Activated B cell treated with CpG ODN at 0.5 μM for 24 hours (primary cell): ENCODE measurements at regions of chr12 and their contacts with region 1.

Region 1: DNA sequence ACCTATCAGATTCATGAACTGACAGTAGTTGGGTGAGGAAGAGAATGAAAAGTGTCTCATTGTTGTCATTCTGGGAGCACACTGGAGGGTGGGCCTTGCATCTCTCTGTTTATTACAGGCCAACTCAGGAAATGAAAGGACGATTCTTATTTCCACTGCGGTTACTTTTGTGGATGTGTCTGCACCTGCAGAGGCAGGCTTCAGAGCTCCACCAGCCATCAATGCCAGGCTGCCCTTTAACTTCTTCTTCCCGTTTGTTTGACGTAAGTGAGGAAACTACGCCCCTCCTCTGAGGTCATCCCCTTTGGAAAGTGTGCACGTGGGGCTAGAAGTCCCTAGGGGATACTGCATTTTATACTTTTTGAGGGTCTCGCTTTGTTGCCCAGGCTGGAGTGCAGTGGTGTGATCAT is 33.7 kb downstream of the TCTN1 start:
- DNase-seq: peak; percentile 56
- ATAC-seq: peak; percentile 82
- H3K4me3 Mint-ChIP-seq: peak overlapping the region; percentile 45
- H3K27ac Mint-ChIP-seq: peak overlapping the region; percentile 89
- H3K4me1 Mint-ChIP-seq: peaks cover 96% of the 10 kb centered on the region
- H3K27me3 Mint-ChIP-seq: no peaks in the 10 kb centered on the region
- CTCF ChIP-seq: no peak

Region 2: DNA sequence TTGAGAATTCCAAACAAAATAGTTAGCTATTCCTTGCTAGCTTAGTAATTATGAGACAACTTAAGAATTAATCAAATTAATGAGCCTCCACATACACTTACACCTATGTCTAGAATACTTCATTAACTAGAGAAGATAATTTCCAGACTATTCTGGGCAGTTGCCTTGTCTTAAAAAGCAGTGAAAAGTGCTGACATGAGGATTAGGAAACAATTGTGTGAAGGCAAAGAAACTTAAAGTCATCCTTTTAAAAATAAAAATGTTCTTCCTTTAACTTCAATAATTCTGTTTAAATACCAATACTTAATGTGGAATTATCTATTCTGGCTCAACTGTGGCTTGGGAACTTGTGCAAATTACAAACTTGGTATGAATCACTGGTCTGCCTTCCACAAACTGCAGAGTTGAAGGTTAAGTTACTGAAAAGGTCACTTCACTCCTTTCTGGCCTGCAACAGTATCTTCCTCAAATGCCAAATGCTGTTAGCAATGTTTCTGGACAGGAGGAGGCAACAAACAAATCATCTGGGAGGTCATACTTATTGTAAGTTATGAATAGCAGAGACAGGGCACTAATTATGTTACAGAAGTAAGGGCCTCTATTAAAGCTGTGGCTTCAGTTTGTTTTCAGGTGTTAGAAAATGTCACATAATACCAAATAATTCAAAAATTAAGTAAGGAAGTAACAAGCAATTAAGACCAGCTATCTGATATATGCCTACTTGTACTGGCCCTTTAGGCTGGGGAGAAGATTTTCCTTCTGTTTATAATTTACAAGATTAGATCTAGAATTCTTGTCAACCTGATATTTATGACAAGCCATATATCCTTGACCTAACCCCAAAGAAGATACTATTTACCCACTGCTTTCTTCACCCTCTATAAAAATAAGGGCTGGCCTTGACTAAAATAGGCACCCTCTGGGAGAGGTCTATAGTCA is 83.7 kb before region 1 on chr12:
- CTCF ChIA-PET with region 1: no interaction called
- POLR2A ChIA-PET with region 1: interaction called, 12 read pairs
- intact Hi-C with region 1: no loop called
- DNase-seq: no peak
- ATAC-seq: no peak
- H3K4me3 Mint-ChIP-seq: peak overlapping the region; percentile 55
- H3K27ac Mint-ChIP-seq: peak overlapping the region; percentile 92
- H3K4me1 Mint-ChIP-seq: peaks cover 87% of the 10 kb centered on the region
- H3K27me3 Mint-ChIP-seq: no peaks in the 10 kb centered on the region
- CTCF ChIP-seq: no peak

Region 3: DNA sequence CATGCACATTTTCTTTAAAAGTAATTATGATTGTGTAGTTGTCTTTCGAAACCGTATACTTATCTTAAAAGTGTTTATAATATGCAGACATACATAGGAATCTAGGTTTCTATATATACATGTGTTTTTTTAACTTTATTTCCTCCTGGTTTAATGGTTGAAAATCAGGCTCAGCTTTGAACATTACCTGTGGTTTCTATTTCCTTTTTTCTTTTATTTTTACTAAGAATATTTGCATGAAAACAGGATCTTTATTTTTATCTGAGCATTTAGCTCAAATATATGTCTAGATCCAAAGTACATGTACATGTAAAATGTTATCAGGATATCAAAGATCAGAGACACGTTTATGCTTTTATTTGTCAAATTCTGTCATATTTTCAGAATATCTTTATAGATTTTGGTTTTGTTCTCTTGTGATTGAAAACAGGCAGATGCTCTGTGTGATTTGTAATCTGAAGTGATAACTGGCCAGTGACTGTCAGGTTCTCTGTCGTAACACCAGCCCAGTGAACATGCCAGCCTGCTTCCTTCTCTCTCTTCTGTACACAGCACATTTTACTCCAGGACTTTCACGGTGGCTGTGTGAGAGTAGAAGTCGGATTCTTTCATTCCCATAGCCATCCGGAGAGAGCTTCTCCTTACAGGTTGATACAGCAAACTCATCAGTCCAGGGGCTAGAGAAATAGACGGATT is 20.0 kb before region 1 on chr12:
- CTCF ChIA-PET with region 1: no interaction called
- POLR2A ChIA-PET with region 1: interaction called, 30 read pairs
- intact Hi-C with region 1: loop called (anchors 2 kb)
- DNase-seq: no peak
- ATAC-seq: peak; percentile 69
- H3K4me3 Mint-ChIP-seq: peak overlapping the region; percentile 71
- H3K27ac Mint-ChIP-seq: peak overlapping the region; percentile 95
- H3K4me1 Mint-ChIP-seq: peaks cover 83% of the 10 kb centered on the region
- H3K27me3 Mint-ChIP-seq: no peaks in the 10 kb centered on the region
- CTCF ChIP-seq: no peak

Region 4: GRCh38 chr12:110670161-110670701 is 22.6 kb after region 1 on chr12:
- CTCF ChIA-PET with region 1: no interaction called
- POLR2A ChIA-PET with region 1: interaction called, 12 read pairs
- intact Hi-C with region 1: no loop called
- DNase-seq: no peak
- ATAC-seq: peak; percentile 36
- H3K4me3 Mint-ChIP-seq: peak overlapping the region; percentile 78
- H3K27ac Mint-ChIP-seq: peak overlapping the region; percentile 94
- H3K4me1 Mint-ChIP-seq: peaks cover 96% of the 10 kb centered on the region
- H3K27me3 Mint-ChIP-seq: no peaks in the 10 kb centered on the region
- CTCF ChIP-seq: no peak

Region 5: DNA sequence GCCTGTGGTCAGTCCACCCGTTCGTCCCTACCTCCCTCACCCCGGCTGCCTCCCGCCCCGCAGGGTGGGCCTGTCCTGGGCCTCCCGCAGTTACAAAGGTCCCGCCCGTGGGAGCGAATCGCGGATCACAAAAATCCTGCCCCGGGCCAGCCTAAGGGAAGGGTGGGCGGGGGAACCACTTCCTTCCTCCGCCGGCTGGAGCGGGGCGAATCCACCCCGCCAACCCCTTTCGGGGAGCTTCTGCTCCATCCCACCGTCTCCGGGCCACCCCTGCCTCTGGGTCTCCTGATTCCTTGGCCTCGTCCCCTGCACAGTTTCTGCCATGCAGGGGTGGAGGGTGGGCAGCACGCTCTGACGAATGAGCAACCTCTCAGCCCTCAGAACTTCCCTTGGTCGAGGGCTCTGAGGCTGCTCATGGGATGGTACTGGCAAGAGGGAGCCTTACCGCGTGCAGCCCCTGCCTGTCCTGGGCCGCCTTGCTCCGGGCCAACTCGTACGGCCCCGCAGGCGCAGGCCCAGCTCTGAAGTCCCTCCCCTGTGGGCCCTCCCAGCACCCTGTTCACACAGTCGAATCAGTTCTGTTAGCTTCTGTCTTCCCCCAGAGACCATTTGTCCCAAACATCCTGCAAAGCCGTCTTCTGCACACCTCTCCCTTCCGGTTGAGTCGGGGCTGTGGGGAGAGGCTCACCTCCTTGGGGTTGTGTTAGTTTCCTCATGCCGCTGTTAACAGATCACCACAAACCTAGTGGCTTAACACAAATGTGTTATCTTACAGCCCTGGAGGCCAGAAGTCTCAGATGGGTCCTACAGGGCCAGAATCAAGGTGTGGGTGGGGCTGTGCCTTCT is 41.9 kb after region 1 on chr12:
- CTCF ChIA-PET with region 1: no interaction called
- POLR2A ChIA-PET with region 1: interaction called, 13 read pairs
- intact Hi-C with region 1: loop called (anchors 1 kb)
- DNase-seq: peak; percentile 61
- ATAC-seq: peak; percentile 63
- H3K4me3 Mint-ChIP-seq: peak overlapping the region; percentile 92
- H3K27ac Mint-ChIP-seq: peak overlapping the region; percentile 89
- H3K4me1 Mint-ChIP-seq: peaks cover 82% of the 10 kb centered on the region
- H3K27me3 Mint-ChIP-seq: no peaks in the 10 kb centered on the region
- CTCF ChIP-seq: no peak